ENCODE measurements at regions of chr16 and their contacts with region 1.

Region 1: DNA sequence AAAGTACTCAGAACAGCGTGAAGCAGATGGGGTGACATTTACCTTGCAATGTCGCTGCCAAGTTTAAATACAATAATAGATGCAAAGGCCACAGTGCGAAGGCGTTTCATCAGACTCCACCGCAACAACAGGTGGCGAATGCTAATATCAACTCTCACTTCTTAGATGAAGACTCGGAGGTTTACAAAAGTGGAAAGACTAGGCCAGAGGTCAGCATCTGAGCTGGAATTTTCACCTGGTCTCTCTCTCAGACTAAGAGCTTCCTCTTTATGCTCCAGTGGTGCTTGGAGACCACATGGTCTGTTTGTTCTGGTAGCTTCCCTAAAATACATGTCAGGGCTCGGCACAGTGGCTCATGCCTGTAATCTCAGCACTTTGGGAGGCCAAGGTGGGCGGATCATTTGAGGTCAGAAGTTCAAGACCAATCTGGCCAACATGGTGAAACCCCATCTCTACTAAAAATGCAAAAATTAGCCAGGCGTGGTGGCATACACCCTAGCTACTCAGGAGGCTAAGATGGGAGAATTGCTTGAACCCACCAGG is 169.1 kb downstream of the XYLT1 start:
- DNase-seq: peak; percentile 50
- H3K4me3 ChIP-seq: no peak overlapping the region
- H3K27ac ChIP-seq: peak overlapping the region; percentile 36
- H3K4me1 ChIP-seq: peaks cover 12% of the 10 kb centered on the region
- H3K27me3 ChIP-seq: no peaks in the 10 kb centered on the region
- CTCF ChIP-seq: no peak

Region 2: DNA sequence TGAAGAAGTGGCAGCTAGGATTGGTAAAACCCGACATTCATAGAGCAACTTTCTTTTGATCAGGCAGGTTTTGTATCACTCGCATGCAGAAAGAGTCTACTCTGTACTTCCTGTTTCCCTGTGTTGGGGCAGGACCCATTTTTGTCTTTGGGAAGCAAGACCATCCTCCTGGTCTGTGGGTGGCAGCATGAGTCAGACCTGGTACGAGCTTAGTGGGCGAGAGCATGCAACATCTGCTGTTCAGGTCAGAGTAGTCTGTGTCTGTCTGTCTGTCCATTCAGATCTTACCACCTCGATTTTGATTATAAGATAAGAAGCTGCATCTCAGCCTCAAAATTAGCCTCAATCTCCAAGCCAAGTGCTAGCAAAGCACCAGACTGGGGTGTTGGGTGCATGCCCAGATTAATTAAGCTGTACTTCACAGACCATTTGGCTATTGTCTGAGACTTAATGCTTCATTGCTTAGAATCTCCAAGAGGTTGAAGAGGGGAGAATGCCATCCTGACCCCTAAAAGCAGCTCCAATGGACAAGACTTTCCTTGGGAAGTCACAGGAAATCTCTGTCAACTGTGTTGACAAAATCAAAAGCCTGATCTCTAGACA is 58.2 kb after region 1 on chr16:
- intact Hi-C with region 1: loop called (anchors 5 kb)
- DNase-seq: no peak
- H3K4me3 ChIP-seq: no peak overlapping the region
- H3K27ac ChIP-seq: no peak overlapping the region
- H3K4me1 ChIP-seq: peaks cover 6% of the 10 kb centered on the region
- H3K27me3 ChIP-seq: no peaks in the 10 kb centered on the region
- CTCF ChIP-seq: no peak